Activated CD4-positive, alpha-beta T cell treated with anti-CD3 and anti-CD28 coated beads for 36 hours (primary cell): ENCODE measurements at regions of chr1 and their contacts with region 1.

Region 1: DNA sequence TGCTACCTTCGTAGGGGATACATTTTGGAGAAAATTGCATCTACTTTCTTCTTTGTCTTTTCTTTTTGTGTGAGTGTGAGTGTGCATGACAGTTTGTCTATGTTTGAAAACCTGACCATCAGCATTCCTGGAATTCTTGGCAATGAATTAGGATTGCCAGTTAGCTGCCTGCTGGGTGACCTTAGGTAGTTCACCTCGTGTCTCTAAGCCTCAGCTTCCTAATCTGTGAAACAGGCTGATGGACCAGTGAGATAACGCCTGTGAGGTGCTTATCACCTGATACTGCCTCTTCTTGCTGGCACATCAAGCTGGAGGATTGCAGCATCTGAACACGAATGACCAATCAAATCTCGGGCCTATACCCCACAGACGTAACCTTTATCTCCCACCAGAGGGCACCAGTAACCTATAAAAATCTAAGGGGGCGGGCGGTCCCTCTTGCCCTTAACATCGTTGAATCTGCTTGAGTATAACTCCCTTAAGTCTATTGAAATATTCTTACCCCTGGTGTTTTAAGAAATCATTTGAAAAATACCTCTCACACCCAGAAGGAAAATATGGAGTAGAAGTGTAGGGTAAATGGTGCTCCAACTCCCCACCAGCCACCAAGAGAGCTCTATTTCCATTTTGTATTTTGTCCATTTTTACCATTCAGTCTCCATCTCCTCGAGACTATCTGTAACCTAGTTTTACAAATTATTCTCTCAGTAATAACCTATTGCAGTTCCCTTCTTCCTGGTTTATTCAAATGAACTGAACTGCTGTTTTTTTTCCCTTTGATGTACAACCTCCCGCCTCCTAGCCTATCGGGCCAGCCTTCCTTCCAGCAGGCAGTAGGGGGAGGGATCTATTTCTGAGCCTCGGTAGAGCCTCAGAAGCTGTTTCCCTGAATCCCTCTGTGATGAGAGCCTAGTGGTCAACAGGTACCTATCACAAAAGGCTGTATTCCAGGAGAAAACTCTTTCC is 49.7 kb downstream of the MDM4 start:
- DNase-seq: peak; percentile 76
- ATAC-seq: peak; percentile 81
- H3K4me3 Mint-ChIP-seq: no peak overlapping the region
- H3K27ac Mint-ChIP-seq: peak overlapping the region; percentile 81
- H3K4me1 Mint-ChIP-seq: peaks cover 54% of the 10 kb centered on the region
- H3K27me3 Mint-ChIP-seq: no peaks in the 10 kb centered on the region

Region 2: DNA sequence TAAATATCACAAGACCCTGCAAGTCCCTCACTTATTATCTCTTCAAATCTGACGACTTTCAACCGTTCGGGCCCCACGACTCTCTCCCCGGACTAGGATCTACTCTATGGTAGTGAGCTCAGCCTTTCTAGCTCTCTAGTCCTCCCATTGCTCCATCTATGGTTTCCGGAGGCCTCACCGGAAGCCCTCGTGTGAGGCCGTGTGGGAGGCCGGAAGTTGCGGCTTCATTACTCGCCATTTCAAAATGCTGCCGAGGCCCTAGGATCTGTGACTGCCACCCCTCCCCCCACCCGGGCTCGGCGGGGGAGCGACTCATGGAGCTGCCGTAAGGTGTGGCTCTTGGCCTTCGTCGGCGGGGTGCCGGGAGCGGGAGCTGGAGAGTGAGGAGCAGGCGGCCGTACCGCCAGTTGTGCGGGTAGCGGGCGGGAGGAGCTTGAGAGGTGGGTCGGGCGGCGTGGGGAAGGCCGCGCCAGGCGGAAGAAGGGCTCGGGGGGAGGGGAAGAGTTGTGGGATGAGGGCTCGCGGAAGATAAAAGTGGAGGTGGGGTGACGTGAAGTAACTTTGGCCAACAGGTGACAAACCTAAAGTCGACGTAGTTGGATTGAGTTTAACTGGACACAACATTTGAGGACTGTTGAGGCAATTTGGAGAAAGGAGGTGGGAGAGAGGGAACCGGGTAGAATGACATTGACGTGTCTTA is 49.6 kb before region 1 on chr1 and contains the start of gene MDM4:
- CTCF ChIA-PET with region 1: interaction called, 3 read pairs
- POLR2A ChIA-PET with region 1: interaction called, 5 read pairs
- intact Hi-C with region 1: loop called (anchors 2 to 5 kb)
- DNase-seq: peak; percentile 98
- ATAC-seq: peak; percentile 85
- H3K4me3 Mint-ChIP-seq: no peak within 1 kb of the TSS
- H3K27ac Mint-ChIP-seq: no peak within 1 kb of the TSS
- H3K4me1 Mint-ChIP-seq: peaks cover 62% of the 10 kb centered on the region
- H3K27me3 Mint-ChIP-seq: no peaks in the 10 kb centered on the region
- total RNA-seq, gene MDM4: 89.1 to 94.6 TPM

Region 3: DNA sequence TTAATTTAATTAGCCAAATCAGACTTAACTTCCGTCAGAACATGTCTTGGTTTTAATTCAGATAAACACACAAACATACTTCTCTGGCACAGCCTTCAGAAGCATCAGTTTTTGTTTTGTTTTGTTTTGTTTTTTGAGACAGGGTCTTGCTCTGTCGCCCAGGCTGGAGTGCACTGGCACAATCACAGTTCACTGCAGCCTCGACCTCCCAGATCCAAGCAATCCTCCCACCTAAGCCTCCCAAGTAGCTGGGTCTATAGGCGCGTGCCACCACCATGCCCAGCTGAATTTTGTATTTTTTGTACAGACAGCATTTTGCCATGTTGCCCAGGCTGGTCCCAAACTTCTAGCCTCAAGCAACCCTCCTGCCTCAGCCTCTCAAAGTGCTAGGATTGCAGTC is 15.0 kb before region 1 on chr1:
- CTCF ChIA-PET with region 1: interaction called, 23 read pairs
- POLR2A ChIA-PET with region 1: no interaction called
- intact Hi-C with region 1: no loop called
- DNase-seq: no peak
- ATAC-seq: no peak
- H3K4me3 Mint-ChIP-seq: no peak overlapping the region
- H3K27ac Mint-ChIP-seq: no peak overlapping the region
- H3K4me1 Mint-ChIP-seq: peaks cover 26% of the 10 kb centered on the region
- H3K27me3 Mint-ChIP-seq: no peaks in the 10 kb centered on the region

Region 4: GRCh38 chr1:204736836-204737387 is 171.0 kb after region 1 on chr1:
- CTCF ChIA-PET with region 1: no interaction called
- POLR2A ChIA-PET with region 1: no interaction called
- intact Hi-C with region 1: no loop called
- DNase-seq: no peak
- ATAC-seq: no peak
- H3K4me3 Mint-ChIP-seq: no peak overlapping the region
- H3K27ac Mint-ChIP-seq: no peak overlapping the region
- H3K4me1 Mint-ChIP-seq: no peaks in the 10 kb centered on the region
- H3K27me3 Mint-ChIP-seq: peaks cover 11% of the 10 kb centered on the region

Region 5: GRCh38 chr1:204763706-204764427 is 198.0 kb after region 1 on chr1:
- CTCF ChIA-PET with region 1: interaction called, 37 read pairs
- POLR2A ChIA-PET with region 1: interaction called, 5 read pairs
- intact Hi-C with region 1: loop called (anchors 1 to 2 kb)
- DNase-seq: peak; percentile 90
- ATAC-seq: peak; percentile 95
- H3K4me3 Mint-ChIP-seq: no peak overlapping the region
- H3K27ac Mint-ChIP-seq: no peak overlapping the region
- H3K4me1 Mint-ChIP-seq: peaks cover 9% of the 10 kb centered on the region
- H3K27me3 Mint-ChIP-seq: peaks cover 8% of the 10 kb centered on the region

Region 6: DNA sequence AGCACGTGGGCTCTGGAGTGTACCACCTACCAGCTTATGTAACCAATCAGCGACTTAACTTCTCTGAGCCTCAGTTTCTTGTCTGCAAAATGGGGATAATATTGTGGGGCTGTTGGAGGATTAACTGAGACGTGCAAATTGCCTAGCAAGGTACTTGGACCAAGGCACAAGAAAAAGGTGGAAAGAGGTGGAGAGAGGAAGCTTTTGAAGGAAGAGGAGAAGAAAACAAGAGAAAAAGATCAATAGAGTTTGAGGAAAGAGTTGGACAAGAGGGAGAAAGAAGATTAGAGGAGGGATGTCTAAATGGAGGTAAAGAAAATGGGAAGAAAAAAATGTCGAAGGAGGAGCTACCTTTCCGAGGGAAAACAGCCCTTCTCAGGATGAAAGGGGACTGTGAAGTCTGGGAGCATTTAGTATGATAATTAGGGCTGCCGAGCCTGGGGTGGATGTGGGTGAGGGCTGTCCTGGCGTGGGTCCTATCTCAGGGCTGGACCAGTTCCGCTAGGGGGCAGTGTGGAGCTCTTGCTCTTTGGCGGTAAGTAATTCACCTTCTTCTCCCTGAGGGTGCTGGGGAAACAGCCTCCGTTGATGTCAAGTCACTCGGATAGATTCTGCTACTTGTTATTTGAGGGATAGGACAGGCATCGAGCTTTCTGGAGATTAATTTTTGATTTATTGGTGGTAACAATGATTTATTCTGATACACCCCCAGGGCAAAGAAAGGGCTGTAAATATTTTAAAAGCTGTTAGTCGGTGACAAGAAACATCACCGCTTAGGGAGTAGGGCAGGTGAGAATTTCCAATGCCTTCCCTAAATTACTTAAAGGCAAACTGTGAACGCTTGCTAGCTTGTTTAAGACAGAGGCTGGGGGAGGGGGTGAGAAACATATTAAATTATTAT is 225.8 kb after region 1 on chr1:
- CTCF ChIA-PET with region 1: interaction called, 13 read pairs
- POLR2A ChIA-PET with region 1: no interaction called
- intact Hi-C with region 1: no loop called
- DNase-seq: peak; percentile 93
- ATAC-seq: peak; percentile 96
- H3K4me3 Mint-ChIP-seq: no peak overlapping the region
- H3K27ac Mint-ChIP-seq: no peak overlapping the region
- H3K4me1 Mint-ChIP-seq: peaks cover 2% of the 10 kb centered on the region
- H3K27me3 Mint-ChIP-seq: peaks cover 21% of the 10 kb centered on the region